Sigmoid colon (tissue), 7 donors: ENCODE measurements at regions of chr4 and their contacts with region 1.

Region 1: GRCh38 chr4:21827575-21827974 is 121.0 kb downstream of the KCNIP4 start:
- DNase-seq: no peak
- H3K4me3 ChIP-seq: no peak overlapping the region
- H3K27ac ChIP-seq: peak overlapping the region in 2 of 4 donors; percentile 16 to 36
- H3K4me1 ChIP-seq: peaks cover 0 to 26% (median 18%) of the 10 kb centered on the region in 4 donors
- H3K27me3 ChIP-seq: no peaks in the 10 kb centered on the region
- CTCF ChIP-seq: no peak
- EP300 ChIP-seq: peak in 1 of 4 donors; percentile 6
- POLR2A ChIP-seq: no peak

Region 2: DNA sequence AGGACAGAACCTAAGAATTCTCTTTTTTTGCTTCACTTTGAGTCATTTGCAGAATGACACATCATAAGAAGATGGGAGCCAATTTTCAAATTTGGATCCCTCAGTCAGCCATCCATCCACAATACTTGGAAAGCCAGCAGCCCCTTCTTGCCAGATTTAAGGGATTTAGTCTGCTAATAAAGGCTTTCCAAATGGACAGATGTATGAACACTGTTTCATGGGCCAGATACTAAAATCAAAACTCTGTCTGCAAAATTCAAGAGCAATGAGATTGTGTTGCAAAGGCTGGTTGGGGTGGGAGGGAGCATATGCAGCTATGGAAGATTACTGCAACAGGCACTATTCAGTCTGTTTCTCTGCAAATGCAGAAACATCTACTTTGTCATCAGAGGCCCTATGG is 158.7 kb after region 1 on chr4:
- intact Hi-C with region 1: loop called (anchors 10 kb)
- DNase-seq: no peak
- H3K4me3 ChIP-seq: no peak overlapping the region
- H3K27ac ChIP-seq: no peak overlapping the region
- H3K4me1 ChIP-seq: peaks cover 0 to 13% (median 8%) of the 10 kb centered on the region in 4 donors
- H3K27me3 ChIP-seq: no peaks in the 10 kb centered on the region
- CTCF ChIP-seq: no peak
- EP300 ChIP-seq: no peak
- POLR2A ChIP-seq: no peak